Activated T-helper 1 cell treated with anti-CD3 and anti-CD28 coated beads, Interleukin-12 subunit alpha, Interleukin-12 subunit beta, Interleukin-2, Interleukin-4 antibody, amounts not matched to agents 30 ng/mL and 10 ng/mL and 1 ng/mL, durations not matched to agents 14 hours and 24 hours and 36 hours (primary cell): ENCODE measurements at regions of chr9 and their contacts with region 1.

Region 1: GRCh38 chr9:122827761-122828093 is 661 bp downstream of the PDCL start:
- DNase-seq: no peak
- H3K4me3 Mint-ChIP-seq: peak overlapping the region; percentile 96
- H3K27ac Mint-ChIP-seq: peak overlapping the region; percentile 84
- H3K4me1 Mint-ChIP-seq: peaks cover 36% of the 10 kb centered on the region
- H3K27me3 Mint-ChIP-seq: no peaks in the 10 kb centered on the region

Region 2: GRCh38 chr9:122159026-122159924 is 668.5 kb before region 1 on chr9 and contains the starts of genes MORN5 and NDUFA8:
- intact Hi-C with region 1: loop called (anchors 1 kb)
- DNase-seq: peak; percentile 95
- H3K4me3 Mint-ChIP-seq: peak within 1 kb of the TSS; percentile 93
- H3K27ac Mint-ChIP-seq: peak within 1 kb of the TSS; percentile 87
- H3K4me1 Mint-ChIP-seq: peaks cover 35% of the 10 kb centered on the region
- H3K27me3 Mint-ChIP-seq: peaks cover 12% of the 10 kb centered on the region
- total RNA-seq, gene MORN5: not detected in 2 replicates
- total RNA-seq, gene NDUFA8: 49.6 and 51.6 TPM in 2 replicates

Region 3: DNA sequence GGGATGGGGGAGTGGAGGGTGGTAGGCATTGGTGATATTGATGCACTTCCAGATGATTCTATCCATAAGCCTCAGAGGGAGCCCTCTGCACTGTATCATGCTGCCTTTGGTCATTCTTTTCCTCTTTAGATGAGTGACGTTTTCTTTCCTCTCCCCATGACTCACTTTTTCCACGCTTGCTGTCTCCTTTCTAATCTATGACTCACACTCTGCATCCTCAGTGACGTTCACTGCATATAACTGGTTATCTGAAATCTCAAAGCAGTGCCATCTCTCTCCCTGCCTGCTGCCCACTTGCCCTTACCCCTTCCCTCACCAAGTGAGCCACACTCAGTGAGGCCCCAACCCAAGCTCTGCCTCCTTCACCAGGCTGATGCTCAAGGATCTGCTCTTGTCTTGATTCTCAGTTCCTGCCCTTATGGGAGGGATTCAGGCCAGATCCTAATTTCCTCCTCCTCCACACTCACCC is 425.3 kb before region 1 on chr9:
- intact Hi-C with region 1: loop called (anchors 5 kb)
- DNase-seq: peak; percentile 33
- H3K4me3 Mint-ChIP-seq: peak overlapping the region; percentile 5
- H3K27ac Mint-ChIP-seq: peak overlapping the region; percentile 86
- H3K4me1 Mint-ChIP-seq: peaks cover 25% of the 10 kb centered on the region
- H3K27me3 Mint-ChIP-seq: peaks cover 6% of the 10 kb centered on the region

Region 4: GRCh38 chr9:122931226-122932121 is 103.7 kb after region 1 on chr9 and contains the start of gene ZBTB26:
- intact Hi-C with region 1: loop called (anchors 1 kb)
- DNase-seq: peak; percentile 83
- H3K4me3 Mint-ChIP-seq: no peak within 1 kb of the TSS
- H3K27ac Mint-ChIP-seq: peak within 1 kb of the TSS; percentile 83
- H3K4me1 Mint-ChIP-seq: peaks cover 8% of the 10 kb centered on the region
- H3K27me3 Mint-ChIP-seq: no peaks in the 10 kb centered on the region
- total RNA-seq, gene ZBTB26: 8.3 and 9.9 TPM in 2 replicates

Region 5: GRCh38 chr9:123091459-123091858 is 263.7 kb after region 1 on chr9:
- intact Hi-C with region 1: no loop called
- DNase-seq: no peak
- H3K4me3 Mint-ChIP-seq: no peak overlapping the region
- H3K27ac Mint-ChIP-seq: no peak overlapping the region
- H3K4me1 Mint-ChIP-seq: no peaks in the 10 kb centered on the region
- H3K27me3 Mint-ChIP-seq: no peaks in the 10 kb centered on the region

Region 6: GRCh38 chr9:123338710-123339665 is 511.3 kb after region 1 on chr9:
- intact Hi-C with region 1: loop called (anchors 5 kb)
- DNase-seq: peak; percentile 62
- H3K4me3 Mint-ChIP-seq: peak overlapping the region; percentile 83
- H3K27ac Mint-ChIP-seq: peak overlapping the region; percentile 93
- H3K4me1 Mint-ChIP-seq: peaks cover 40% of the 10 kb centered on the region
- H3K27me3 Mint-ChIP-seq: no peaks in the 10 kb centered on the region